ENCODE measurements at regions of chr4 and their contacts with region 1.

Region 1: GRCh38 chr4:77819843-77820648 is 878 bp upstream of the CNOT6L start:
- DNase-seq: peak; percentile 94
- H3K4me3 ChIP-seq: peak overlapping the region; percentile 95 to 98 (median 96)
- H3K27ac ChIP-seq: peak overlapping the region; percentile 99 to 100 (median 100)
- H3K4me1 ChIP-seq: peaks cover 0 to 39% (median 23%) of the 10 kb centered on the region in 4 donors
- H3K27me3 ChIP-seq: no peaks in the 10 kb centered on the region
- CTCF ChIP-seq: no peak
- EP300 ChIP-seq: peak in 1 of 4 donors; percentile 30
- POLR2A ChIP-seq: peak; percentile 76 to 89

Region 2: GRCh38 chr4:77676842-77677241 is 143.2 kb before region 1 on chr4:
- intact Hi-C with region 1: no loop called
- DNase-seq: no peak
- H3K4me3 ChIP-seq: no peak overlapping the region
- H3K27ac ChIP-seq: no peak overlapping the region
- H3K4me1 ChIP-seq: peaks cover 0 to 7% (median 0%) of the 10 kb centered on the region in 4 donors
- H3K27me3 ChIP-seq: no peaks in the 10 kb centered on the region
- CTCF ChIP-seq: no peak
- EP300 ChIP-seq: no peak
- POLR2A ChIP-seq: no peak

Region 3: GRCh38 chr4:77758804-77759203 is 61.2 kb before region 1 on chr4:
- intact Hi-C with region 1: loop called (anchors 10 kb)
- DNase-seq: no peak
- H3K4me3 ChIP-seq: no peak overlapping the region
- H3K27ac ChIP-seq: no peak overlapping the region
- H3K4me1 ChIP-seq: no peaks in the 10 kb centered on the region
- H3K27me3 ChIP-seq: no peaks in the 10 kb centered on the region
- CTCF ChIP-seq: no peak
- EP300 ChIP-seq: no peak
- POLR2A ChIP-seq: no peak

Region 4: DNA sequence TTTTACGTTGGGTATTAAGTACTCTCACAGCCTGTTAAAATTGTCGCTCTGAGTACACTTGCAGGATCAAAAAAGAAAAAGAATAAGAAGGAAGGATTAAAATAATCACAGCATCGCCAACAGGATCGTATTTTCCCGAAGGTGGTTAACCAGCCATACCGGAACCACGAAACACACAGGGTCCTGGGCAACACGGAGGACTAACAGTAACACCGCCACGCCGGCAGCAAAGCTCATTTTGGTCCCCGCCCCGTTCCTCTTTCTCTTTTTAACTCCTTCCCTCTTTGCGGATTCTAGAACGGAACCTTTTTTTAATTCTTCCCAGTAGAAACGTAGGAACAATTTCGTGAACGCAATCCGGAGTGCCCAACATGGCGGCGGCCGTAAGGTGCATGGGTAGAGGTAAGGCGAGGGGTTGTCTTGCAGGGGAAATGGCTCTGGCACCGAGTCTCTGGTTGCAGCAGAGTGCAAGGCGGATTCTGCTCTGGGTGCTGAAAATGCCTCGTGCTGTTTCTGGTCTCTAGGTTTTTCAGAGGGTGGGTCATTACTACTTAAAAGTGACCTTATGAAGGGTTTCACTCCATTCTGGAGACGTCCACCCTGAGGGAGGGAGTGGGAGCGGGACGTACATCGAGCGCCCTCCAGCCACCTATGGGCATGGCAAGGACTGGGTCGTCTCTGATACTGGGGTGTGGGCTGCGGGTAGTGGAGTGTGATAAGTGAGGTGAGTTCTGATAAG is 42.6 kb after region 1 on chr4 and contains the start of gene MRPL1:
- intact Hi-C with region 1: loop called (anchors 1 kb)
- DNase-seq: peak; percentile 96
- H3K4me3 ChIP-seq: peak within 1 kb of the TSS; percentile 47 to 71 (median 63)
- H3K27ac ChIP-seq: peak within 1 kb of the TSS; percentile 82 to 93 (median 90)
- H3K4me1 ChIP-seq: peaks cover 0 to 17% (median 10%) of the 10 kb centered on the region in 4 donors
- H3K27me3 ChIP-seq: no peaks in the 10 kb centered on the region
- CTCF ChIP-seq: no peak
- EP300 ChIP-seq: peak in 1 of 4 donors; percentile 43
- POLR2A ChIP-seq: peak; percentile 31 to 44
- total RNA-seq, gene MRPL1: 23.2 to 30.0 (median 28.9) TPM

Region 5: GRCh38 chr4:78056265-78057129 is 236.5 kb after region 1 on chr4:
- intact Hi-C with region 1: loop called (anchors 5 kb)
- DNase-seq: peak; percentile 90
- H3K4me3 ChIP-seq: peak overlapping the region; percentile 42 to 63 (median 56)
- H3K27ac ChIP-seq: peak overlapping the region; percentile 75 to 89 (median 83)
- H3K4me1 ChIP-seq: peaks cover 0 to 32% (median 17%) of the 10 kb centered on the region in 4 donors
- H3K27me3 ChIP-seq: no peaks in the 10 kb centered on the region
- CTCF ChIP-seq: no peak
- EP300 ChIP-seq: peak in 1 of 4 donors; percentile 92
- POLR2A ChIP-seq: peak in 1 of 2 donors; percentile 20